A549 (cell line): ENCODE measurements at regions of chr1 and their contacts with region 1.

Region 1: DNA sequence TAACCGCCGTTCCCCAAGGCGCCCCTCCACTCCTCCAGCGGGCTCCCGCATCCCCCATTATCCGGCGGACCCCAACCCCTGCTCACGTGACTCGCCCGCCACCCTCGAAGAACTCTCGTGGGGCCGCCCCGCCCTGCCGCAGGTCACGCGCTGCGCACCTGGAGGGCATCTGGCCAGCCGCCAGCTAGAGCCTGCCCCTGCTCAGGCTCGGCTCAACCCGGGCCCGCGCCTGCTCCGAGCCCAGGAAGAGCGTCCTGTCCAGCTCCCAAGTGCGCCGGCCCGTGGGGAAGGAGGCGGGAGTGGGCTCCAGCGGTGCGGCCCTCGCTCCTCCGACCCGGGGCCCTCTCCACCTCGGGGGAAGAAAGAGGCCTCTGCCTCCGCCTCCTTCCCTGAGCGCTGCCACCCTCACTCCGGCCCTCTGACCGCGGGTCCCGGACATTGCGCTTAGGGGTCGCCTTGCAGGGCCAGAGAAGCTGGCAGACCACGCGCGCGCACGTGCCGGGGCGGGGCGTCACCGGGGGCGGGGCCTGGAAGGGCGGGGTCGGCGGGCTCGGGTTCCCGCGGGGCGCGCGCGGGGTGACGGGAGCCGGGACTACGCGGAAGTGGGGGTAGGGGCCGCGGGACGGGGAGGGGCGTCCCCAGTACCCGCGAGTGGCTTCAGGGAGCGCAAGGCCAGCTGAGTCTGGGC is 28.4 kb downstream of the HMGN2 start:
- DNase-seq: peak; percentile 24 to 85
- ATAC-seq: peak; percentile 88 to 91
- H3K4me3 ChIP-seq: peak overlapping the region; percentile 59
- H3K27ac ChIP-seq: peak overlapping the region; percentile 90 to 99
- H3K4me1 ChIP-seq: peaks cover 13% of the 10 kb centered on the region; the same call in 2 of the 3 replicates
- CTCF ChIP-seq: no peak
- EP300 ChIP-seq: no peak
- POLR2A ChIP-seq: no peak; the same call in 1 of the 2 replicates
- RAD21 ChIP-seq: no peak

Region 2: DNA sequence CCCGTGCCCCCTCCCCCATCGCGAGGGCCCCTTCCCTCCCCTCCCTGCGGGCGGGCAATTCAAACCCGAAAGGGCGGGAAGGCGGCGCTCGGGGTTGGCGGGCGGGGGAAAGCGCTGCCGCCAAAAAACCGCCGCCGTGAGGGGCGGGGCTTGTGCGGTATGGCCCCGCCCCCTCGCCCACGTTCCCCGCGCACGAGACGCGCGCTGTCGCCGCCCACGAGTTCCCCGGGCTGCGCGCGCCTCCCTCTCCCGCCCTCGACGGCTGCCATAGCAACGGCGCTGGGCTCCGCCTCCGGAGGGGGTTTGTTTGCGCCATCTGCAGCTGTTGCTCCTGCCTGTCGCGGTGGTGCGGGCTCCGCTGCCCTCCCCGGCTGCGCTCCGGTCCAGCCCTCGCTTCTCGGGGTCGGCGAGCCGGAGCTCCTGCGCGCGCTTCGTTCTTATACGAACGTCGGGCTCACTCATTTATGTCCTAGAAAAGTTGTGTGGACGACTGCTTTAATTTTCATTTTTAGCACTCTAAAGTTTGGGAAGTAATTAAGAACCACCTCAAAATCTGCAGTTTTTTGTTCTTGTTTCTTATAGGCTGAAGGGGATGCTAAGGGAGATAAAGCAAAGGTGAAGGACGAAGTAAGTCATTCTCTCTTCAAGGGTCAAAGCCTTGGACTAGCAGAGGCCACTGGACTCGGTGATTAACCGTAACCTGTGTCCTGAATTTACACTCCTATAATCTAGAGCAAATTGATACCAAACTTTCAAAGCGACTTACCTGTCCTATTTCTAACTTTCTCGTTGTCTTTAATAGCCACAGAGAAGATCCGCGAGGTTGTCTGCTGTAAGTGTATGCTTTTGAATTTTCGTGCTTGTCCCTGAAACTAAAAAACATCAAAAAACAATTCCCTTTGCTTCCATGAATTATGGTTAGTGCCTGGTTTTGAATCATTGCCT is 27.5 kb before region 1 on chr1:
- CTCF ChIA-PET with region 1: interaction called, 13 read pairs
- POLR2A ChIA-PET with region 1: interaction called, 4 read pairs
- DNase-seq: peak; percentile 72 to 88
- ATAC-seq: peak; percentile 60 to 70
- H3K4me3 ChIP-seq: peak overlapping the region; percentile 83
- H3K27ac ChIP-seq: peak overlapping the region; percentile 98 to 100
- H3K4me1 ChIP-seq: peaks cover 20% of the 10 kb centered on the region; the same call in 2 of the 3 replicates
- CTCF ChIP-seq: no peak
- EP300 ChIP-seq: no peak
- POLR2A ChIP-seq: no peak
- RAD21 ChIP-seq: no peak

Region 3: DNA sequence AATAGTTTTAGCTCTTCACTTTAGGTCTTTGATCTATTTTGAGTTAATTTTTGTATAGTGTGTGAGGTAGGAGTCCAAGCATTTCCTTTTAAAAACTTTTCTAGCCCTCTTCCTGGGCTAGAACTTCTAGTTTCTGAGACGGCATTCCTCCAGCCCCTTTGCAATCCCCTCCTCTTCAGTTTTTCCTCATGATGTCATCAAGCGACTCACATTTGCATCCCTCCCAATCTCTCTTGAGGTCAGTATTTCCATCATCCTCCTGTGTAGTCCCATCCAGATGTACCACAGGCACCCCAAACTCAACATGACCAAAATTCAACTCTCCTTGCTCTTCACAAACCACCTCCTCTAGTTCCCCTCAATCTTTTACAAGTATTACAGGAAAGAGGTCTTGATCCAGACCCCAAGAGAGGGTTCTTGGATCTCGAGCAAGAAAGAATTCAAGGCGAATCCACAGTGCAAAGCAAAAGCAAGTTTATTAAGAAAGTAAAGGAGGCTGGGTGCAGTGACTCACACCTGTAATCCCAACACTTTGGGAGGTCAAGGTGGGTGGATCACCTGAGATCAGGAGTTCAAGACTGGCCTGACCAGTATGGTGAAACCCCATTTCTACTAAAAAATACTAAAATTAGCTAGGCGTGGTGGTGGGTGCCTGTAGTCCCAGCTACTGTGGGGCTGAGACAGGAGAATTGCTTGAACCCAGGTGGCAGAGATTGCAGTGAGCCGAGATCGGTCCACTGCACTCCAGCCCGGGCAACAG is 17.5 kb before region 1 on chr1:
- CTCF ChIA-PET with region 1: interaction called, 18 read pairs
- POLR2A ChIA-PET with region 1: interaction called, 4 read pairs
- DNase-seq: no peak
- ATAC-seq: no peak
- H3K4me3 ChIP-seq: no peak overlapping the region
- H3K27ac ChIP-seq: no peak overlapping the region
- H3K4me1 ChIP-seq: peaks cover 6% of the 10 kb centered on the region; the same call in 1 of the 3 replicates
- CTCF ChIP-seq: no peak
- EP300 ChIP-seq: no peak
- POLR2A ChIP-seq: no peak
- RAD21 ChIP-seq: no peak

Region 4: DNA sequence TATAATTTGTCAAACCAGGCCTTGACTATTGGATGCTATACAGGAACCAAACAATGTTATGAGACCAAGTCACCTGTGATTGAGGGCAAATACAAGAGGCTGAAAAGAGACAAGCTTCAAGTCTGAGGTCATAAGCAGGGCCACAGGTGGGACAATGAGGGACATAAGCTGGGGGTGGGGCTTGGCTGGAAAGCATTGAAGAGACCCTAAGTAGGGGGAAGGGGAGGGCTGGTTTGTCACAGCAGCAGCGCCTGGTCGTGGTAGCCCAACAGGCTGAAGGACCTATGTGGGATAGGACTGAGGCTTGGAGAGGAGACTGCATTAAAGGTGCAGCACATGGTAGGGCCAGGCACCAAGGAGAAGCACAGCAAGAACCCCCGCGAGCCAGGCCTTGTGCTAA is 10.5 kb before region 1 on chr1:
- CTCF ChIA-PET with region 1: interaction called, 14 read pairs
- POLR2A ChIA-PET with region 1: interaction called, 6 read pairs
- DNase-seq: no peak
- ATAC-seq: no peak
- H3K4me3 ChIP-seq: no peak overlapping the region
- H3K27ac ChIP-seq: no peak overlapping the region
- H3K4me1 ChIP-seq: peaks cover 6% of the 10 kb centered on the region; the same call in 1 of the 3 replicates
- CTCF ChIP-seq: no peak
- EP300 ChIP-seq: no peak
- POLR2A ChIP-seq: no peak
- RAD21 ChIP-seq: no peak

Region 5: GRCh38 chr1:26529655-26530409 is 29.2 kb after region 1 on chr1 and contains the start of gene RPS6KA1:
- CTCF ChIA-PET with region 1: interaction called, 25 read pairs
- POLR2A ChIA-PET with region 1: interaction called, 25 read pairs
- DNase-seq: peak; percentile 37 to 79
- ATAC-seq: peak; percentile 71 to 77
- H3K4me3 ChIP-seq: peak within 1 kb of the TSS; percentile 58
- H3K27ac ChIP-seq: peak within 1 kb of the TSS; percentile 72 to 92
- H3K4me1 ChIP-seq: peaks cover 21% of the 10 kb centered on the region
- CTCF ChIP-seq: no peak
- EP300 ChIP-seq: no peak
- POLR2A ChIP-seq: peak; percentile 48
- RAD21 ChIP-seq: no peak
- polyA plus RNA-seq, gene RPS6KA1: 9.8 and 11.8 TPM in 2 replicates

Region 6: DNA sequence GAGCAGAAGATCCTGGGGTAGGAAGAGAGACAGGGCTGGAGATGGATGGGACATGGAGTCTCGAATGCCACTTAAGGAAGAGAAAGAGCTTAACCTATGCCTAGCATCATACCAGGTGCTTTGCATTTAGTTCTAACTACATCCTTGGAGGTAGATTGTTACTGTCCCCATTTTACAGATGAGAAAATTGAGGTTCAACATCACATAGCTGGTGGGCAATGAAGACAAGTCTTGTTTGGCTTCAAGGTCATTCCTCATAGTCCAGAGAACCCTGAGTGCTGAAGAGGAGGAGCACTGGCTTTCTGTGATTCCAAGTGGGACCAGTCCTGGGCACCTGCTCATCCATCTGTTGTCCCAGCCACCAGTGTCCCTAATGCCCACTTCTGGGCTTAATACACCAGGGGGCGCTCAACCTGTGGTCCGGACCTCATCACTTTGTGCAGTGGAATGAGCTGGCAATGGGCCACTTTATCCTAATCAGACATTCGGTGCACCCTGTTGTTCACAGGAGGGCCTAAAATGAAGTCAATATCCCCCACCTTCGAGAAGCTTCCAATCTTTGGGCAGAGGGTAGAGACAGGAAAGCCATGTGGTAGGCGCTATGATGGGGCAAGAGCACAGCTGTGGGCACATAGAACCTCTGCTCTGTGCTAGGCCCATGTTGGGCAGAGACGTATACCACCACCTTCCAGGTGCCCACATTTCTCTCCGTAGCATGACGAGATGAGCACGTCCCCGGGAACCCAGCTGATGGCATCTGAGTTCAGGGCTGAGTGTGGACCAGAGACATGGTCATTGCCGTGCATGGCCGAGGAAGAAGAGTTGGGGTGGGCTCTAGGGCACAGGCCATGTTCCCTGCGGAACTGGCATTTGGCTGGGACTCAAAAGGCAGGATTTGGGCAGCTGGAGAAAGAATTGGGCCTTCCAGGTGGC is 38.1 kb after region 1 on chr1:
- CTCF ChIA-PET with region 1: interaction called, 28 read pairs
- POLR2A ChIA-PET with region 1: no interaction called
- DNase-seq: peak; percentile 44 to 51
- ATAC-seq: peak; percentile 40 to 72; a peak in 4 of 6 replicates
- H3K4me3 ChIP-seq: no peak overlapping the region
- H3K27ac ChIP-seq: no peak overlapping the region
- H3K4me1 ChIP-seq: peaks cover 12% of the 10 kb centered on the region; the same call in 1 of the 3 replicates
- CTCF ChIP-seq: peak; percentile 37
- EP300 ChIP-seq: no peak
- POLR2A ChIP-seq: no peak
- RAD21 ChIP-seq: no peak